ENCODE measurements at regions of chr19 and their contacts with region 1.

Region 1: GRCh38 chr19:12139885-12140547 is at the start of gene ZNF20:
- DNase-seq: peak; percentile 66
- H3K4me3 ChIP-seq: peak within 1 kb of the TSS; percentile 78
- H3K27me3 ChIP-seq: no peaks in the 10 kb centered on the region
- CTCF ChIP-seq: no peak
- polyA plus RNA-seq, gene ZNF20: 2.1 and 2.8 TPM in 2 replicates

Region 2: DNA sequence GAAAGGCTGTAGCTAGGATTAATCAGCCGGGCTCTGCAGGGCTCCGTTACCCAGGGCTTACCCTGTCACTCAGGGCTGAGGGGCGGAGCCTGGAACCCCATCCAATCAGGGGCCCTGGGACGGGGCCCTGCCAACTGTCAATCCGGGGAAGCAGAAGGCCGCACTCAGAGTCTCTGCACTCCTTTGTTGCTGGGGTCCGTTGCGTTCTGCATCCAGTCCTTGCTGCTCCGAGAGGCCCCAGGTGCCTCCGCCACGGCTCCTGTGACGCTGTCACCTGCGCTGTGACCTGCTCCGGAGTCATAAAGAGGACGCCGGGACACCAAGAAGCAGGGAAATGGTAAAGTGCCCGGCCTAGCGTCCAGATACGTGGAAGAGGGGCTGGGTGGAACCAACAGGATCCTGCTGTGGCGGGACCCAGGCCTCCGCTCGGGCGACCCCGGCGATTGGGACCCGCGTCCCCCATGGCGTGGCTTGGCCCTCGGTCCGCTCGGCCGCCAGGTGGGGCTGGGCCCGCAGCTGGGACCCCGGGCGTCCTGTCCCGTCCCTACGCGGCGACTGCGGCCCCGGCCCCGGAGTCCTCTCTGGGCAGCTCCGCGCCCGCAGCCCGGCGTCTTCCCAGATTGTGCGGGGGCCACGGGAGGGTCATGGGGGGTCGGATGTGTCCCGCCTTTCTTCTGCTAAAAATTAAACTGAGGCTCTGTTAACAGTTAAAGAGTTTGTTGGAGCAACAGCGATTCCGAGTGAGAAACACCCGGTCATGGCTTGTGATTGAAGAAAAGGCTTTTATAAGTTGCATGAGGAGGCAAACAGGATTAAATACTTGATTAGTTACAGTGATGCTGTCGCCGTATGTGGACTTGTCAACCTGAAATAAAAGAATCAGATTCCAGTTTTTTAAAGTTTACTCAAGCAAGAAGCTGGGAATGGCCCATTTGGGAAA is 341.4 kb before region 1 on chr19 and contains the start of gene ZNF491:
- CTCF ChIA-PET with region 1: interaction called, 12 read pairs
- POLR2A ChIA-PET with region 1: no interaction called
- DNase-seq: peak; percentile 49
- H3K4me3 ChIP-seq: peak within 1 kb of the TSS; percentile 68
- H3K27me3 ChIP-seq: no peaks in the 10 kb centered on the region
- CTCF ChIP-seq: peak; percentile 19; the same call in 1 of the 2 replicates
- polyA plus RNA-seq, gene ZNF491: 0.67 and 1.3 TPM in 2 replicates

Region 3: DNA sequence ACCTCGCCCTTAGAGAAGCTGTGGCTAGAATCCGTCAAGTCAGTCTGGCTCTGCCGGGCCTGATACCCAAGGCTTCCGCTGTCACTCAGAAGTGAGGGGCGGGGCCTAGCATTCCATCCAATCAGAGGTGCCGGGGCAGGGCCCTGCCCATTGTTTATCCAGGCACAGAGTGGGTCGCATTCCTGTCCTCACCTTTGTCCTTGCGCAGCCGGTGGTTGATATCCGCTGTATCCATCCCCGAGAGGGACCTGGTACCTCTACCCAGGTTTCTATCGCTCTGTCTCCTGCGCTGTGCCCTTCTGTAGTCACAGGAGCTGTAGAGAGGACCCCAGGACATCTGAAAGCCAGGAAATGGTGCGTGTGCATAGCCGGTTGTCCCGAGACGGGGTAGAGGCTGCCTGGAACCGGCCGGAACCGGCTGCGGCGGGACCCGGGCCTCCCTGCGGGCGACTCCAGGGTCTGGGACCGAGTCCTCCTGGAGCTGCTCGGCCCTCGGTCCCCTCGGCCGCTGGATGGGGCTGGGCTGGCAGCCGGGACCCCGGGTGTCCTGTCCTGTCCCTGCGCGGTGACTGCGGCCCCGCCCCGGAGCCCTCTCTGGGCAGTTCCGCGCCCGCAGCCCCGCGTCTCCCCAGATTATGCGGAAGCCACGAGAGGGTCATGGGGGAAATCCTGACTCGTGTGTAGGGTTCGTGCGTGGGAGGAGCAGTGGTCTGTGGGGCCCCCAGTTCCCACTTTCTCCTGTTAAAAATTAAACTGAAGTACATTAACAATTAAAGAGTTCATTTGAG is 175.0 kb before region 1 on chr19 and contains the start of gene ZNF763:
- CTCF ChIA-PET with region 1: interaction called, 26 read pairs
- POLR2A ChIA-PET with region 1: no interaction called
- DNase-seq: peak; percentile 50
- H3K4me3 ChIP-seq: peak within 1 kb of the TSS; percentile 46
- H3K27me3 ChIP-seq: no peaks in the 10 kb centered on the region
- CTCF ChIP-seq: no peak
- polyA plus RNA-seq, gene ZNF763: 1.6 and 2.2 TPM in 2 replicates

Region 4: DNA sequence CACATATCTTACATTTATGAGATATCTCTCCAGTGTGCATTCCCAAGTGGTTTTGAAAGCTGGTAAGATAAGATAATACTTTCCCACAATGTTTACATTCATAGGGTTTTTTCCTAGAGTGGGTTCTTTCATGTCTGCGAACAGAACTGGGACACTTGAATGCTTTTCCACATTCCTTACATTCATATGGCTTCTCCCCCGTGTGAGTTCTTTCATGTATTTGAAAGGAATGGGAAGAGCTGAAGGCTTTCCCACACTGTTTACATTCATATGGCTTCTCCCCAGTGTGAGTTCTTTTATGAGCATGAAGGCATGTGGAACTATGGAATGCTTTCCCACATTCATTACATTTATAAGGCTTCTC is 124.3 kb before region 1 on chr19:
- CTCF ChIA-PET with region 1: no interaction called
- POLR2A ChIA-PET with region 1: no interaction called
- DNase-seq: no peak
- H3K4me3 ChIP-seq: no peak overlapping the region
- H3K27me3 ChIP-seq: no peaks in the 10 kb centered on the region
- CTCF ChIP-seq: no peak

Region 5: DNA sequence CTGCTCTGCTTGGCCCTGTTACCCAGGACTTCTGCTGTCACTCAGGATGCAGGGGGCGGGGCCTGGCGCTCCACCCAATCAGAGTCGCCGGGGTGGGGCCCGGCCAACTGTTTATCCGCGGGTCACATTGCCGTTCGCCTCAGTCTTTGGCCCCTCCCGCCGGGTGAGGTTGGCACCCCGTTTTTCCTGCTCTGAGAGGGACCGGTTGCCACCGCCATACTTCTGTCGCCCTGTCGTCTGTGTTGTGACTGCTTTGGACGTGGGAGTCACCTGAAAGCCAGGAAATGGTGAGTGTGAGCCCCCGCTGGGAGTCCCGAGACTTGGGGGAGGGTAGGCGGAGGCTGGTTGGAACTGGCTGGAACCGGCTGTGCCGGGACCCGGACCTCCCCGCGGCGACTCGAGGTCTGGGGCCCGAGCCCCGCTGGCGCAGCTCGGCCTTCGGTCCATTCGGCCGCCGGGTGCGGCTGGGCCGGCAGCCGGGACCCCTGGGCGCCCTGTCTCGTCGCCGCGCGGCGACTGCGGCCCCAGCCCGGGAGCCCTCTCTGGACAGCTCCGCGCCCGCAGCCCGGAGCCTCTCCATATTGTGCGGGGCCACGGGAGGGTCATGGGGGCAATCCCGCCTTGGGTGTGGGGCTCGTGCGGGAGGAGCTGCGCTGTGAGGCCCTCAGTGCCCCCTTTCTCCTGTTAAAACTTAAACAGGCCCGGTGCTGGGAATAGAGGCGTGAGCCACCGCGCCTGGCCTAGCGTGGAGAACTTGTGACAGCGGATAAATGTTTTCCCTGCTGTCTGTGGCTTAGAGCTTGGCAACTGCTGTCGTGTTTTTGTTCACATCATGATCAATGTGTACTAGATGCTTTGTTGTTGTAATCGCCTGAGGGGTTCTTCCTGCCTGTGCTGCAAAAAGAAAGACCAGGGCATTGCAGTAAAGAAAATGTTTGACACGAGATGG is 75.2 kb before region 1 on chr19 and contains the start of gene ZNF844:
- CTCF ChIA-PET with region 1: interaction called, 70 read pairs
- POLR2A ChIA-PET with region 1: interaction called, 4 read pairs
- DNase-seq: peak; percentile 62
- H3K4me3 ChIP-seq: peak within 1 kb of the TSS; percentile 66
- H3K27me3 ChIP-seq: no peaks in the 10 kb centered on the region
- CTCF ChIP-seq: no peak
- polyA plus RNA-seq, gene ZNF844: 2.8 and 4.5 TPM in 2 replicates

Region 6: GRCh38 chr19:12156223-12157058 is 16.4 kb after region 1 on chr19 and contains the start of gene ZNF625:
- CTCF ChIA-PET with region 1: interaction called, 19 read pairs
- POLR2A ChIA-PET with region 1: interaction called, 3 read pairs
- DNase-seq: peak; percentile 51
- H3K4me3 ChIP-seq: peak within 1 kb of the TSS; percentile 67
- H3K27me3 ChIP-seq: no peaks in the 10 kb centered on the region
- CTCF ChIP-seq: no peak
- polyA plus RNA-seq, gene ZNF625: 1.5 and 2.2 TPM in 2 replicates

Region 7: GRCh38 chr19:12217332-12217731 is 77.3 kb after region 1 on chr19:
- CTCF ChIA-PET with region 1: no interaction called
- POLR2A ChIA-PET with region 1: no interaction called
- DNase-seq: no peak
- H3K4me3 ChIP-seq: no peak overlapping the region
- H3K27me3 ChIP-seq: no peaks in the 10 kb centered on the region
- CTCF ChIP-seq: no peak

Measured in BJ (cell line).